Psoas muscle (tissue), 8 donors: ENCODE measurements at regions of chr12 and their contacts with region 1.

Region 1: DNA sequence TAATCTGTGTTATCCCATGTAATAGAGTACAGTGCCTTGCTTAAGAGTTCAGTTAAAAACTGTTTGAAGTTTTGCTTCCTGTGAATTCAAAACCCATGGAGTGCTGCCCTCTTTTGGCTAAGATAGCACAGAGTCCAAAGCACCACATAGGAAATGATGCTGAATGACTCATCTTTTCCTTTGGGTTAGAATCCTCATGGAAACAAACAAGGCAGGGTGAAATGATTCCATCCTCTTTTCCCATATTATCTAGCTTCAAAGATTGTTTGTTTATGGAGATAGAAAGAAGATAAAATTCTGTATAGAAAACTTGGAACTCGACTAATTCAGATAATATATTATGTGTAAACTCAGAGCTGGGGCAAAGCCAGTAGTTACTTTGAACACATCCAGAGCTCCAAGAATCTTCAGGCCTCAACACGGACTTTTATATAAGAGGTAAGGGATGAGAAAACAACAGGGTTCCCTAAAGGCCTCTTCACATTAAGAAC is 87.4 kb downstream of the OTOGL start:
- DNase-seq: no peak
- ATAC-seq: peak; percentile 81 to 91 (median 84)
- H3K4me3 ChIP-seq: no peak overlapping the region
- H3K27ac ChIP-seq: peak overlapping the region; percentile 86
- H3K4me1 ChIP-seq: peaks cover 25% of the 10 kb centered on the region
- H3K27me3 ChIP-seq: no peaks in the 10 kb centered on the region
- CTCF ChIP-seq: peak; percentile 66

Region 2: GRCh38 chr12:79547735-79548609 is 638.8 kb before region 1 on chr12:
- intact Hi-C with region 1: loop called in 1 of 2 experiments (anchors 5 kb)
- DNase-seq: no peak
- ATAC-seq: no peak
- H3K4me3 ChIP-seq: no peak overlapping the region
- H3K27ac ChIP-seq: no peak overlapping the region
- H3K4me1 ChIP-seq: no peaks in the 10 kb centered on the region
- H3K27me3 ChIP-seq: no peaks in the 10 kb centered on the region
- CTCF ChIP-seq: peak; percentile 59

Region 3: DNA sequence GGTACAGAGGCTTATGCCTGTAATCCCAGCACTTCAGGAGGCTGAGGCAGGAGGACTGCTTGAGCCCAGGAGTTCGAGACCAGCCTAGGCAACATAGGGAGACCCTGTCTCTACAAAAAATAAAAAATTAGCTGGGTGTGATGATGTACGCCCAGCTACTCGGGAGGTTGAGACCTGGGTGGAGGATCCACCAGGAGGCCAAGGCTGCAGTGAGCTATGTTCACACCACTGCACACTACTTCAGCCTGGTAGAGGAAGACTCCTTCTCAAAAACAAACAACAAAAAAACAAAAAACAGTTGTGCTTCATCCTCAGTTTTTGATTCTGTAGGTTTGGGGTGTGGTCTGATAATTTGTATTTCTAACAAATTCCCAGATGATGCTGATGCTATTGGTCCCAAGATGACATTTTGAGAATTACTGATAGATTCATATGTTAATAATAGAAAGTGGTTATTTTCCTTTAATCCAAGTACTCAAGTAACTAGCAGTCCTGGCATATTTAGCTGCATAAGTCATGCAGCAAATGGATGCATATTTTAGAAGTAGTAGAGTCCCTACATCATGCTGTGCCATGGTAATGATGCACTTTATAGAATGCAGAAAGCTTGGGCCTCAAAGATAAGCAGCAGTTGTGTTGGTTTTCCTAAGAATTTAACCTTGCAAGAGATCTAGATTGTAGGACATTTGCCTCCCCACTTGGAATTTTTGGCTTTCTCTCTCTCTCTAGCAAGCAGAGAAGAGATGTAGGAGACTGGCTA is 419.9 kb before region 1 on chr12:
- intact Hi-C with region 1: loop called in 1 of 2 experiments (anchors 10 kb)
- DNase-seq: no peak
- ATAC-seq: no peak
- H3K4me3 ChIP-seq: no peak overlapping the region
- H3K27ac ChIP-seq: no peak overlapping the region
- H3K4me1 ChIP-seq: no peaks in the 10 kb centered on the region
- H3K27me3 ChIP-seq: no peaks in the 10 kb centered on the region
- CTCF ChIP-seq: no peak

Region 4: DNA sequence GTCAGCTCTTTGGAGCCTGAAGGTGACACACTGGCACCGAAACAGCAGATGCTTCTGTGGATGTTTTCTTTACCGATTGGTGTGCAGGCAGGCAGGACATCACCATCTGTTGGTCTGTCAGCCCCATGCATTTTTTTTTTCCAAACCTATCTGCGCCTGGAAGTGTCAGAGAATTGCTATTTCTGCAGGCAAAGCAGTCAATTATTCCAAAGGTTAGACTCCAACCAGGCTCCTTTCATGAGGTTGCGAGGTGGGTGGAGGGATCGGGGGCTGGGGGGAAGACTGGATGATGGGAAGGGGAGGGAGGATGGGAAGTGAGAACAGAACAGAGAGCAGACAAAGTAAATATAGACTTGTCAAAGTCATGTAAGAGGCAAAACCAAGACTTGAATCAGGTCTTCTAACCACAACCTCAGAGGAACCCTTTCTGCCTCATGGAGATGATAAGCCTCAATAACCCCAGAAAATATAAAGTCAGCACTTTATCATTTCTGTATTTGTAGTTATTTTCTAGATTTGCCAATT is 30.3 kb after region 1 on chr12:
- intact Hi-C with region 1: no loop called
- DNase-seq: no peak
- ATAC-seq: no peak
- H3K4me3 ChIP-seq: no peak overlapping the region
- H3K27ac ChIP-seq: no peak overlapping the region
- H3K4me1 ChIP-seq: no peaks in the 10 kb centered on the region
- H3K27me3 ChIP-seq: no peaks in the 10 kb centered on the region
- CTCF ChIP-seq: no peak